ENCODE measurements at regions of chr12 and their contacts with region 1.

Region 1: DNA sequence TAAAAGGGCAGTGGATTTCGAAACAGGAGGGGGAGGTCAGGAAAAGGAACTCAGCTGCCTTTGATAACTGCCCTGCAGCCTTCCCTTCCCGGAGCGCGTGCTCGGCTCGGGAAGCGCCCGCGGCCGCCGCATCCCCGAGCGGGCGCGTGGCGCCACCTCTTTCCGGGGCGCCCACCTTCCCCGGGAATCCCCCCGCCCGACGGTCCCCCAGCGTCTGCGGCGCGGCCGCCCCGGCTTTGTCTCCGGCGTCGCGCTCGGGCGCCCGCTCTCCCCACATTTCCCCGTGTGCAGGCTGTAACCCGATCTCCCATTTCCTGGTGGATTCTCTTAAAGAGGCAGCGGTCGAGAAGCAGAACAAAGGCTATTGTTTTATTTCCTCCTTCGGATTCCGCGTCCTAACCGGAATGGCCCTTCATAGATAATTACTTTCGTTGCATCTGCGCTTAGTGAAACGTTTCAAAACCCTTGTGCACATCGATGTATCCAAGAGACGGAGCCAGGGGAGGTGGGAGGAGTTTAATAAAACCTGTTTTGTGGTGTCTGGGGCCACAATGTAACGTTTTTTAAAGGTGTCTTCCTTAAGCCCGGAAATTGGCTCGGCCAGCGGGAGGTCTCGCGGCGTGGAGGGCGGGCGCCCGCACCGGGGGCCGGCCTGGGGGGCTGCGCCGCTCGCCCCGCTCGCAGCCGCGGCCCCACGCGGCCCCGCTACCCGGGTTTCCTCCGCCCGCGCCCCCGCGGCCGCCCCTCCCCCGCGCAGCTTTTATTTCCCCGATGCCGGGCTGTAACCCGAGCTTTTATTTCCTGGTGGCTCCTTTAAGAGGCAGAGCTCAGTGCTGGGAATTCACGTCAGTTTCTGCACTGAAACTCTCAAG is at the start of gene ETV6:
- DNase-seq: peak; percentile 51 to 85 (median 79)
- ATAC-seq: peak; percentile 73
- H3K4me3 ChIP-seq: peak within 1 kb of the TSS; percentile 92
- H3K4me3 Mint-ChIP-seq: peak within 1 kb of the TSS; percentile 82 to 99 (median 98)
- H3K27ac ChIP-seq: peak within 1 kb of the TSS; percentile 90
- H3K27ac Mint-ChIP-seq: peak within 1 kb of the TSS; percentile 91 to 99 (median 97)
- H3K4me1 ChIP-seq: peaks cover 6 to 22% of the 10 kb centered on the region in 2 donors
- H3K4me1 Mint-ChIP-seq: peaks cover 24 to 49% (median 36%) of the 10 kb centered on the region in 7 donors
- H3K27me3 ChIP-seq: no peaks in the 10 kb centered on the region
- H3K27me3 Mint-ChIP-seq: no peaks in the 10 kb centered on the region
- total RNA-seq, gene ETV6: 24.2 to 70.3 (median 38.0) TPM

Region 2: DNA sequence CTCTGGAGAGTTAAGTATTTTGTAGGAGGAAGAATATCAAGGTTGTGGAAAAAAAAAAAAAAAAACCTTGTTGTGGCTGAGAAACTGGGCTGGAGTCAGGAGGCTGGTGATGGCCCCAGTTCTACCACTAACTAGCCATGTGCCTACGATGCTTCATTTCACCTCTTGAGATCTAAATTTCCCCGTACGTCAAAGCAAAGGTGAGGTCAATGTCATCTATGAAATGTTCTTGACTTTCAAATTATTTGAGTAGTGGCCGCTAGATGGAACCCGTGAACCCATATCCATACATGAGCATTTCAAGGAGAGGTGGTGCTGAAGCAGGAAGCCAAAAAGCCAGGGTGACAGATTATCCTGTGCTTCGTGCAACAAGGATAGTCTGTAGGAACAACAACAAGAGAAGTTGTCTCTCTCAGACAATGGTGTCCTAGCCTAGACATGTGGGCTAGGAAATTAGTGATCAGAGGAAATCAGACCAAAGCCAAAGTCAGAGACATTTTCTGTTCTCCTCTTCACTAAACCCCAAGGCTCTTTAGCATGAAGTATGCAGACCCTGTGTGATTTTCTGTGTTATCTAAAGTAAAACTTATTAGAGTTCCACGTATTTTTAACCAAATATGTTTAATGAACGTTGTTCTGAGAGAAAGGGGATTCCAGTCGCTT is 95.1 kb before region 1 on chr12:
- CTCF ChIA-PET with region 1: no interaction called
- POLR2A ChIA-PET with region 1: interaction called, 3 read pairs
- intact Hi-C with region 1: loop called in 1 of 2 experiments (anchors 2 kb)
- DNase-seq: peak in 7 of 9 donors; percentile 41 to 66 (median 58)
- ATAC-seq: peak; percentile 81
- H3K4me3 ChIP-seq: no peak overlapping the region
- H3K4me3 Mint-ChIP-seq: peak overlapping the region in 8 of 10 donors; percentile 12 to 71 (median 36)
- H3K27ac ChIP-seq: no peak overlapping the region
- H3K27ac Mint-ChIP-seq: peak overlapping the region in 8 of 9 donors; percentile 38 to 94 (median 58)
- H3K4me1 ChIP-seq: peaks cover 0 to 15% of the 10 kb centered on the region in 2 donors
- H3K4me1 Mint-ChIP-seq: peaks cover 11 to 47% (median 32%) of the 10 kb centered on the region in 7 donors
- H3K27me3 ChIP-seq: no peaks in the 10 kb centered on the region
- H3K27me3 Mint-ChIP-seq: peaks cover 0 to 26% (median 0%) of the 10 kb centered on the region in 5 donors

Region 3: GRCh38 chr12:11730299-11731041 is 81.4 kb after region 1 on chr12:
- CTCF ChIA-PET with region 1: no interaction called
- POLR2A ChIA-PET with region 1: interaction called, 11 read pairs
- intact Hi-C with region 1: loop called (anchors 1 to 2 kb)
- DNase-seq: no peak
- ATAC-seq: peak; percentile 21
- H3K4me3 ChIP-seq: no peak overlapping the region
- H3K4me3 Mint-ChIP-seq: peak overlapping the region; percentile 39 to 90 (median 71)
- H3K27ac ChIP-seq: peak overlapping the region; percentile 34
- H3K27ac Mint-ChIP-seq: peak overlapping the region; percentile 81 to 98 (median 91)
- H3K4me1 ChIP-seq: peaks cover 25 to 60% of the 10 kb centered on the region in 2 donors
- H3K4me1 Mint-ChIP-seq: peaks cover 61 to 86% (median 76%) of the 10 kb centered on the region in 7 donors
- H3K27me3 ChIP-seq: no peaks in the 10 kb centered on the region
- H3K27me3 Mint-ChIP-seq: no peaks in the 10 kb centered on the region

Region 4: GRCh38 chr12:11981121-11981733 is 332.2 kb after region 1 on chr12:
- CTCF ChIA-PET with region 1: no interaction called
- POLR2A ChIA-PET with region 1: no interaction called
- intact Hi-C with region 1: loop called in 1 of 2 experiments (anchors 1 kb)
- DNase-seq: peak; percentile 12 to 87 (median 75)
- ATAC-seq: peak; percentile 95
- H3K4me3 ChIP-seq: peak overlapping the region; percentile 2
- H3K4me3 Mint-ChIP-seq: peak overlapping the region; percentile 2 to 71 (median 56)
- H3K27ac ChIP-seq: peak overlapping the region; percentile 52
- H3K27ac Mint-ChIP-seq: peak overlapping the region; percentile 66 to 98 (median 82)
- H3K4me1 ChIP-seq: peaks cover 23 to 28% of the 10 kb centered on the region in 2 donors
- H3K4me1 Mint-ChIP-seq: peaks cover 26 to 69% (median 48%) of the 10 kb centered on the region in 7 donors
- H3K27me3 ChIP-seq: no peaks in the 10 kb centered on the region
- H3K27me3 Mint-ChIP-seq: peaks cover 0 to 2% (median 0%) of the 10 kb centered on the region in 5 donors

Region 5: GRCh38 chr12:12356886-12357718 is 708.0 kb after region 1 on chr12 and contains the start of gene BORCS5:
- CTCF ChIA-PET with region 1: no interaction called
- POLR2A ChIA-PET with region 1: interaction called, 3 read pairs
- intact Hi-C with region 1: loop called (anchors 1 to 2 kb)
- DNase-seq: peak; percentile 94 to 99 (median 97)
- ATAC-seq: peak; percentile 96
- H3K4me3 ChIP-seq: peak within 1 kb of the TSS; percentile 85
- H3K4me3 Mint-ChIP-seq: peak within 1 kb of the TSS; percentile 90 to 99 (median 96)
- H3K27ac ChIP-seq: peak within 1 kb of the TSS; percentile 99
- H3K27ac Mint-ChIP-seq: peak within 1 kb of the TSS; percentile 92 to 99 (median 98)
- H3K4me1 ChIP-seq: peaks cover 14 to 28% of the 10 kb centered on the region in 2 donors
- H3K4me1 Mint-ChIP-seq: peaks cover 31 to 74% (median 64%) of the 10 kb centered on the region in 7 donors
- H3K27me3 ChIP-seq: no peaks in the 10 kb centered on the region
- H3K27me3 Mint-ChIP-seq: no peaks in the 10 kb centered on the region
- total RNA-seq, gene BORCS5: 15.3 to 28.2 (median 22.1) TPM

Region 6: GRCh38 chr12:13100882-13101769 is 1452.1 kb after region 1 on chr12:
- CTCF ChIA-PET with region 1: no interaction called
- POLR2A ChIA-PET with region 1: no interaction called
- intact Hi-C with region 1: loop called in 1 of 2 experiments (anchors 2 kb)
- DNase-seq: peak; percentile 92 to 96 (median 94)
- ATAC-seq: peak; percentile 93
- H3K4me3 ChIP-seq: peak overlapping the region; percentile 68
- H3K4me3 Mint-ChIP-seq: peak overlapping the region; percentile 82 to 87 (median 84)
- H3K27ac ChIP-seq: peak overlapping the region; percentile 92
- H3K27ac Mint-ChIP-seq: peak overlapping the region; percentile 85 to 99 (median 95)
- H3K4me1 ChIP-seq: peaks cover 6 to 32% of the 10 kb centered on the region in 2 donors
- H3K4me1 Mint-ChIP-seq: peaks cover 24 to 49% (median 43%) of the 10 kb centered on the region in 7 donors
- H3K27me3 ChIP-seq: no peaks in the 10 kb centered on the region
- H3K27me3 Mint-ChIP-seq: peaks cover 0 to 5% (median 0%) of the 10 kb centered on the region in 5 donors

Measured in naive thymus-derived CD4-positive, alpha-beta T cell (primary cell).